Aorta (tissue), 5 donors: ENCODE measurements at regions of chr7 and their contacts with region 1.

Region 1: DNA sequence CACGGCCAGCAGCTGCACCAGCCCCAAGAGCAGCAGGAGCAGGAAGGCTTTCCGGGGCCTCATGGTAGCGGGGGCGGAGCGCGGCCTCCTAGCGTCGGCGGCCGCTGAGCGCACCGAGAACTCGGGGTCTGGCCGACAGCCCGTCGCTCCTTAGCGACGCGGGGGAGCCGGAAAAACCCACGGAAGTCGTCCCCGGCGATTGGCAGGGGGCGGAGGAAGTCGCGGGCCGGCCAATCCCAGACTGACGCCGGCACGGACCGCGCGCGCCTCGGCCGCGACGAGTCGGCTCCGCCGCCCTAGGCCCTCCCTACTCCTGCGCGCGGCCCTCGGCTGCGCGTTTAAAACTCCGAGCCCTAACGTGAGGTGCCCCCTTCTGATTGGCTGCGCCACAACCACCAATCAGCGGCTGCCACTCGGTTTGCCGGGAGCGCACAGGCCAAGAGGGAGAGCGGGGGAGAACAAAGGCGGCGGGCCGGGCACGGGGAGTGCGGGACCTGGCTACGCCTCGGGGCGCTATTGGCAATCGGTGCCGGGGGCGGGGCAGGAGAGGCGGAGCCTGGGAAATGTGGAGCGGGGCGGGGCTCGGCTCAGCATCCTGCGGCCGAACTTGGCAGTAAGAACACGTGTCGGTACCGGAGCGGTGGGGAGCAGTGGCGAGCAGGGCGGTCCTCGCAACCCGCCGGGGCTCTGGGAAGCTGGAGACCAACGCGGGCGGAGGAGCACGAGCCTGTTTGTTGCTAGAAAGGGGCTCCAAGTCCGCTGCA is at the start of gene PDIA4:
- DNase-seq: peak; percentile 100
- ATAC-seq: peak; percentile 100
- H3K4me3 ChIP-seq: peak within 1 kb of the TSS; percentile 62 to 77
- H3K27ac ChIP-seq: peak within 1 kb of the TSS; percentile 20 to 66
- H3K4me1 ChIP-seq: no peaks in the 10 kb centered on the region
- H3K27me3 ChIP-seq: no peaks in the 10 kb centered on the region
- total RNA-seq, gene PDIA4: 80.0 to 86.0 TPM

Region 2: GRCh38 chr7:148987010-148987750 is 41.3 kb before region 1 on chr7:
- intact Hi-C with region 1: loop called in 1 of 2 experiments (anchors 1 kb)
- DNase-seq: peak; percentile 85 to 87
- ATAC-seq: peak; percentile 95
- H3K4me3 ChIP-seq: peak overlapping the region; percentile 50 to 96
- H3K27ac ChIP-seq: peak overlapping the region in 1 of 2 donors; percentile 77
- H3K4me1 ChIP-seq: peaks cover 0 to 2% of the 10 kb centered on the region in 2 donors
- H3K27me3 ChIP-seq: no peaks in the 10 kb centered on the region

Region 3: DNA sequence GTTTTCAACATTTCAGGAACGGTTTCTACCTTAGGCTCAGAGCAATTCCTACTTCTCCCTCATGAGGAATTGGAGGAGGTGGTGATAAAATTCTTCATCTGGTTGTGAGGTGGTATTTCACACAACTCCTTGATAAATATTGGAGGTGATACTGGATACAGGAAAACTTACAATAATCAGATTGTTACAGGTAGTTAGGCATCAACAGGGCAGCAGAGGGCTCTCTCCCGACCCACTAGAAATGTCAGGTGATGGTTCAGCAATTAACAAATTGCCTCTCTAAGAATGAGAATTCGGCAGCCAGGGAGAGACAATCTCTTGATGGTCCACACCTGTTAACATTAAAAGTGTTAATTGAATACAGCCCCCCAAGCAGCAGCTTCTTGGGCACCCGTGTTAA is 39.3 kb after region 1 on chr7:
- intact Hi-C with region 1: loop called (anchors 2 kb)
- DNase-seq: no peak
- ATAC-seq: no peak
- H3K4me3 ChIP-seq: no peak overlapping the region
- H3K27ac ChIP-seq: no peak overlapping the region
- H3K4me1 ChIP-seq: no peaks in the 10 kb centered on the region
- H3K27me3 ChIP-seq: no peaks in the 10 kb centered on the region

Region 4: DNA sequence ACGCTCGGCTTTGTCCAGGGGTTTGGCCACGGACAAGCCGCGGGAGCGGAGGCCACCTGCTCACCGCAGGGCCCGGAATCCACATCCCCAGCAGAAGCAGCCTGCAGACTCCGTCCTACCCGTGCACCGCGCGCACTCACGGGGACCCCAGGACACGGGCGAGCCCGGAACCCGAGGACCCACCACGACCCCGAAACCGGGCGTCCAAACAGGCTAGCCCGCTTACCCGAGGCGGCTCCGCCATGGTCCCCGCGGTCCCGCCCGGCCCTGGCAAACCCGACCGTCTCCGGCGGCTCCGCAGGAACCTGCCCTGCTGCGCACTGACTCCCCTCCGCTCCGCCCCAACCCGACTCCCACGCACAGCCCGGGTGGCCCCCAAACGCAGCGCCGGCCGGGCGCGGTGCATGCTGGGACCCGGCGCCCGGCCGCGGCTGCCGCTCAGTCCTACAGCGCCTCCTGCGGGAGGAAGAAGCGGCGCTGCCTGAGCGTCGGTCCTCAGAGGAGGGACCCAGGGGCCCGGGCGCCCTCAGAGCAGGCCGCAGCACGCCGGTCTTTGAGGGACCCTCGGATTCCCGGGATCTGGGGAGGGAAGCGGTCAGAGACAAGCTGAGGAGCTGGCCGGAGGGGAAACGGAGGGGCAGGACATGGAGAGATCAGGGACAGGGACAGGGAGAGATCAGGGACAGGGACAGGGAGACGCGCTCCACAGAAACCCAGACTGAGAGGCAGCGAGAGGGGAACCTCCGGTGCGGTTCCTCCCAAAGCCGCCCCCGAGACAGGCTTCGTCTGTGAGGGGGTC is 62.1 kb after region 1 on chr7 and contains the start of gene ZNF786:
- intact Hi-C with region 1: loop called in 1 of 2 experiments (anchors 2 kb)
- DNase-seq: peak; percentile 93 to 96
- ATAC-seq: peak; percentile 100
- H3K4me3 ChIP-seq: peak within 1 kb of the TSS; percentile 43 to 52
- H3K27ac ChIP-seq: peak within 1 kb of the TSS; percentile 74 to 94
- H3K4me1 ChIP-seq: no peaks in the 10 kb centered on the region
- H3K27me3 ChIP-seq: no peaks in the 10 kb centered on the region
- total RNA-seq, gene ZNF786: 4.3 to 6.4 TPM

Region 5: DNA sequence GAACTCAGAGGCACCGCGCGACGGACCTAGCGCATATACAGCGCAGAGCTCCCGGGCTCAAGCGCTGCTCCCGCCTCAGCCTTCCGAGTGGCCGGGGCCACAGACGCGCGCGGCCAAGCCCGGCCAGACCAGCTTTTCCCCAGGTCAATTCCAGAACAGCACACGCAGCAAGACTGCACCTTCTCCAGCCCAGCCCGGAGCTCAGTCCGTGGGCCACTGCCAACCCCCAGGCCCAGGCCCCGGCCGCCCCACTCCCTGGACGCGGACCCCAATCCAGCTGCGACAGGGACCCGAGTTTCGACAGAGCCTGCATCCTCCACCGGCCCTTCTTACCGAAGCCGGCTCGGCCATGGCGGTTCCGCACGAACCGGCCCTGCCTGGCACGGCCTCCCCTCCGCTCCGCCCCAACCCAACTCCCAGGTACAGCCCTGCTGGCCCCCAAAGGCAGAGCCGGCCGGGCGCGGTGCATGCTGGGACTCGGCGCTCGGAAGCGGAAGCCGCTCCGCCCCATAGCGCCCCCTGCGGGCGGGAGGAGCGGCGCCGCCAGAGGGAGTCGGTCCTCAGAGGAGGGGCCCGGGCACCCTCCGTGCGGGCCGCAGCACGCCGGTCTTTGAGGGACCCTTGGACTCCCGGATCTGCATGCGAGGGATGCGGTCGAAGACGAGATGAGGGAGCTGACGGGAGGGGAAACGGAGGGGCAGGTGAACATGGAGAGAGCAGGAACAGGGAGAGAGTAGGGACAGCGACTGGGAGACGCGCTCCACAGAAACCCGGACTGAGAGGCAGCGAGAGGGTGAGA is 97.5 kb after region 1 on chr7 and contains the start of gene ZNF425:
- intact Hi-C with region 1: loop called in 1 of 2 experiments (anchors 1 kb)
- DNase-seq: peak; percentile 95 to 98
- ATAC-seq: peak; percentile 99
- H3K4me3 ChIP-seq: peak within 1 kb of the TSS; percentile 71 to 74
- H3K27ac ChIP-seq: peak within 1 kb of the TSS; percentile 62 to 70
- H3K4me1 ChIP-seq: no peaks in the 10 kb centered on the region
- H3K27me3 ChIP-seq: no peaks in the 10 kb centered on the region
- total RNA-seq, gene ZNF425: 1.0 to 1.3 TPM